ENCODE measurements at regions of chr13 and their contacts with region 1.

Region 1: GRCh38 chr13:108218044-108218974 is at the start of gene ABHD13:
- DNase-seq: peak; percentile 89
- H3K4me3 ChIP-seq: peak within 1 kb of the TSS; percentile 86
- H3K27ac ChIP-seq: peak within 1 kb of the TSS; percentile 57
- H3K4me1 ChIP-seq: peaks cover 27% of the 10 kb centered on the region
- CTCF ChIP-seq: no peak
- total RNA-seq, gene ABHD13: 1.4 and 2.1 TPM in 2 replicates

Region 2: DNA sequence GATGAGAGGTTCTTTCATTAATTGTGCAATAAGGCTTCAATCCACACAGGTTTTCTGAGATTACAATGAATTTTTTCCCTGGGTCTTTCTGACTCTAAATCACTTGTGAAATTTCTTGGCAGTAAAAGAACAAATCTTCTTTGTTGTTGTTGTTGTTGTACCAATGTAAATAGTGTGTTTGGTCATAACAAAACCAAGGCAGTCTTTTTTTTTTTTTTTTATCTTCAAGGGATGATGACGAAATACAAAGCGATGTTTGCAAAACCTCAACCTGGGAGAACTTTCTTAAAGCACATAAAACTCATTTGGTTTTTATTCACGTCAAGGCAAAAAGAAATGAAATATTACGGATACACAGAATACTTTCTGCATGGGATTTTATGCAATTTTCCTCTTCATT is 465.0 kb before region 1 on chr13:
- CTCF ChIA-PET with region 1: no interaction called
- POLR2A ChIA-PET with region 1: no interaction called
- intact Hi-C with region 1: no loop called
- DNase-seq: no peak
- H3K4me3 ChIP-seq: no peak overlapping the region
- H3K27ac ChIP-seq: no peak overlapping the region
- H3K4me1 ChIP-seq: no peaks in the 10 kb centered on the region
- CTCF ChIP-seq: no peak

Region 3: GRCh38 chr13:108176685-108177274 is 41.5 kb before region 1 on chr13:
- CTCF ChIA-PET with region 1: no interaction called
- POLR2A ChIA-PET with region 1: no interaction called
- intact Hi-C with region 1: loop called (anchors 2 kb)
- DNase-seq: peak; percentile 52
- H3K4me3 ChIP-seq: no peak overlapping the region
- H3K27ac ChIP-seq: no peak overlapping the region
- H3K4me1 ChIP-seq: no peaks in the 10 kb centered on the region
- CTCF ChIP-seq: peak; percentile 67

Region 4: DNA sequence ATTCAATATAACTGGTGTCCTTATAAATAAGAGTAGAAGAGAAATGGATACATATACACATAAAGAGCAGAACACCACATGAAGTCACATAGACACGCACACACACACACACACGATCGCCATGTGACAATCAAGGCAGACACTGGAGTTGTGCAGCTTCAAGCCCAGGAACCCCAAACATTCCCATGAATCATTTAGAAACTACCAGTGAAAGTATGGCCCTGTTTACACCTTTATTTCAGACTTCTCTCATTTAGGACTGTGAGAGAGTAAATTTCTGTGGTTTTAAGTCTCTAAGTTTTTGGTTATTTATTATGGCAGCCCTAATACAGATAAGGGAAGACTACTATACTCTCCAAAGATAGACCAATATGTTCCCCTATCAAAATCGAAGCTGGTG is 30.8 kb after region 1 on chr13:
- CTCF ChIA-PET with region 1: no interaction called
- POLR2A ChIA-PET with region 1: no interaction called
- intact Hi-C with region 1: no loop called
- DNase-seq: no peak
- H3K4me3 ChIP-seq: no peak overlapping the region
- H3K27ac ChIP-seq: no peak overlapping the region
- H3K4me1 ChIP-seq: no peaks in the 10 kb centered on the region
- CTCF ChIP-seq: no peak

Region 5: DNA sequence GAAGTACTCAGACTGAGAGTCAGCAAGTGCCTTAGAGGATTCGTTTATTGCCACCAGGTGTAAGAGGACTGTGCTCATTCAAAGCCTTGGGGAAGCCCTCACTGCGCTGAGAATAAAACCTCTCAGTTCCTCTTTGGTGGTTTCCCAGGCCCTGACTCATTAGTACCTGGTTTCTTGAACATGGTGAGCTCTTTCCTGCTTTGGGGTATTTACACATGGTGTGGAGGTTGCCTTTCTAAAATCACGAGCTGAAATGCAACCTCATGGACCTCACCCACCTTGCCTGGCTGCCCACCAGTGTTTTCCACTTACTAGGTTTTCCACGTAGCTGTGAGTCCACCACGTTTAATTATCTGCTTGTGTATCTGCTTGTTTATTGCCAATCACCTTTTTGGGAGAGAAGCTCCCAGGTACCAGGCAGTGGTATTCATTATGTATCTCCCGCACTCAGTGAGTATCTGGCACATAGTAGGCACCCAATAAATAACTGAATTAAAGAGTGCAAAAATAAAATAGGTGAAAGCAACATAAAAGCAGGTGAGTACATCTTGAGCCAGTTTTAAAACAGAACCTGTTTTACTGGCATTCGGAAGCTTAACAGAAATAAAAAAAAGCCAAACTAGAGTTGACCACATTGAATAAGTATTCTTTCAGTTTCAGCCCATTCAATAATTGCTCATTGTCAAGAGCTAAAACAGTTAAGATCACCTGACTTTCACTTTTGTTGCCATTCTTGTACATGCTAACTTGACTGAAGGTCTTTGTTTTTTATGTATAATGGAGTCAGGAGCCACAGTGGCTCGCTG is 944.1 kb after region 1 on chr13:
- CTCF ChIA-PET with region 1: no interaction called
- POLR2A ChIA-PET with region 1: no interaction called
- intact Hi-C with region 1: loop called (anchors 10 kb)
- DNase-seq: peak; percentile 89
- H3K4me3 ChIP-seq: peak overlapping the region; percentile 65
- H3K27ac ChIP-seq: peak overlapping the region; percentile 88
- H3K4me1 ChIP-seq: peaks cover 68% of the 10 kb centered on the region
- CTCF ChIP-seq: no peak

Measured in OCI-LY7 (cell line).